ENCODE measurements at regions of chr14 and their contacts with region 1.

Region 1: DNA sequence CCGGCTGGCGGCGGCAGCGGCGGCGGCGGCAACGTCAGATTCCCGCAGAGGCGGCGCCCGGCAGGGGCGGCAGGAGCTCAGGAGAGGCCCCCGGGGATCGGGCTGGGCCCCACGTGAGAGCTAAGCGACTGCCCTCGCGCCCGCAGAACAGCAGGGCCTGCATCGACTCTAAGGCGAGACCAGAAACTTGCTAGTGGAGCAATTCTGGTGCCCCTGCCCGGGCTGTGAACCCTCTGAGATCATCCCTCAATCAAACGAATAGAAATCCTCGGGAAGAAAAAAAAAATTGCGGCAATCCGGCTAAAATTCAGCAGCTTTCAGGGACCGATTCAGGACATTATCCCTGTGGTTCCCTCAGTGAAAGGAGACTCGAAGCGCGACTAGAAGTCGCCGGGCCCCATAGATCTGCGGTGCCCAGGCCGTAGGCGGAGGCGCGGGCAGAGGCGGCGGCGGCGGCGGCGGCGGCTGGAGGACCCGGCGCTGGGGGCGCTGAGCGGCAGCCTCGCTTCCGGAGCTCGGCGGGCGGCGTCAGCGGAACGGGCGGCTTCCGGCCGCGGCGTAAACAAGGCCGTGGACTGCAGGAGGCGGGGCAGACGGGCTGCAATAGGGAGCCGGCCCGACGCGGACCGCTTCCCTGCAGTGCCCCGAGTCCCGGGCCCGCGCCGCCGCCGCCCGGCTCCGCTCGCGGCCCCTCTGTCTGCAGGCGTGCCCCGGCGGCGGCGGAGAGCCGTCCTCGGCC is at the start of gene KLHDC2:
- DNase-seq: peak; percentile 92 to 95 (median 94)
- ATAC-seq: peak; percentile 75 to 86 (median 78)
- H3K4me3 ChIP-seq: peak within 1 kb of the TSS; percentile 91 to 97 (median 93)
- H3K27ac ChIP-seq: peak within 1 kb of the TSS; percentile 99
- H3K4me1 ChIP-seq: peaks cover 0 to 26% (median 14%) of the 10 kb centered on the region in 4 donors
- H3K27me3 ChIP-seq: no peaks in the 10 kb centered on the region
- CTCF ChIP-seq: peak; percentile 26 to 63 (median 42)
- POLR2A ChIP-seq: peak; percentile 99
- total RNA-seq, gene KLHDC2: 34.0 to 69.6 (median 49.7) TPM

Region 2: DNA sequence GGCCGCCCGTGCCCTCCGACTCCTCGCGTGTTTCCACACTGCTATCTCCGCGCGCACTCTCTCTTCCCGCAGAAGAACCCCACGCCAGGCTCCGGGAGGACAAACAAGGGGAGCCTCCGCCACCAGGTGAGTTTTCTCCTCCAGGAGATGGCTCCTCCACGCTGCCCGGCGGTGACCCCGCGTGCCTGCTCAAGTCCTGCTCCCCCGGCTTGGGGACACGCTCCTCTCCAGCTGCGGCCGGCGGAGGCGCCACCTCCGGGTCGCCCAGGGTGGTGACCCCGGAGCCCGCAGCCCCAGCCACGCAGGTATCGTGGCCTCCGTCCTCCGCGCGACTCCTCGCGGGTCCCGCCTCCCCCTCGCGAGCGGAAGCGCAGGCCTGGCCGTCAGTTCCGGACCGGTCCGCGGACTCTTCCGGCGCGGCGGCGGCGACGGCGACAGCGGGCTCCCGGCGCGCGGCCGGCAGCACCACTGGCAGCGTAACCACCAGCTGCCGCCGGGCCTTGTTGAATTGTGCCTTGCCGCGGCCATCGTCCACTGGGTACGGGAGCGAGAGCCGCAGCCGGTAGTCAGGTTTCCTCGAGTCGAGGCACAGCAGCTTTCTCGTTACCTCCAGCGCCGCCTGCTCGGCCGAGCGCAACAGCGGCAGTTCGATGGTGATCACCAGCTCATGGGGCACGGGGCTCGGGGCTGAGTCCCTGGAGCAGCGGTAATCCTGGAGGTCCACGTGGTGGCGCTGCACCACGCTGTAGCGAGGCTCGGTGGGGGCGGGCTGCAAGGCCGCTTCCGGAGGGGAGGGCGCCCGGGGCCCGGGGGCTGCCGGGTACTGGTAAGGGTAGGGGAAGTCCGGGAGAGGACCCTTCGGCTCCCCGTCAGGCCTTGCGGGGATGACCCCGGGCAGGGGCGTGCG is 133.8 kb before region 1 on chr14:
- intact Hi-C with region 1: loop called in 1 of 2 experiments (anchors 10 kb)
- DNase-seq: peak; percentile 95 to 96 (median 95)
- ATAC-seq: peak; percentile 87 to 95 (median 90)
- H3K4me3 ChIP-seq: peak overlapping the region; percentile 92 to 97 (median 95)
- H3K27ac ChIP-seq: peak overlapping the region; percentile 91 to 97 (median 95)
- H3K4me1 ChIP-seq: peaks cover 0 to 37% (median 0%) of the 10 kb centered on the region in 4 donors
- H3K27me3 ChIP-seq: no peaks in the 10 kb centered on the region
- CTCF ChIP-seq: peak; percentile 84 to 89 (median 87)
- POLR2A ChIP-seq: peak; percentile 92

Region 3: GRCh38 chr14:49641697-49642129 is 126.0 kb before region 1 on chr14:
- intact Hi-C with region 1: loop called (anchors 10 kb)
- DNase-seq: peak; percentile 63 to 91 (median 83)
- ATAC-seq: peak; percentile 93 to 96 (median 94)
- H3K4me3 ChIP-seq: peak overlapping the region in 1 of 3 donors; percentile 2
- H3K27ac ChIP-seq: peak overlapping the region; percentile 35 to 86 (median 78)
- H3K4me1 ChIP-seq: peaks cover 0 to 47% (median 16%) of the 10 kb centered on the region in 4 donors
- H3K27me3 ChIP-seq: no peaks in the 10 kb centered on the region
- CTCF ChIP-seq: no peak
- POLR2A ChIP-seq: peak; percentile 7